ENCODE measurements at regions of chr14 and their contacts with region 1.

Region 1: DNA sequence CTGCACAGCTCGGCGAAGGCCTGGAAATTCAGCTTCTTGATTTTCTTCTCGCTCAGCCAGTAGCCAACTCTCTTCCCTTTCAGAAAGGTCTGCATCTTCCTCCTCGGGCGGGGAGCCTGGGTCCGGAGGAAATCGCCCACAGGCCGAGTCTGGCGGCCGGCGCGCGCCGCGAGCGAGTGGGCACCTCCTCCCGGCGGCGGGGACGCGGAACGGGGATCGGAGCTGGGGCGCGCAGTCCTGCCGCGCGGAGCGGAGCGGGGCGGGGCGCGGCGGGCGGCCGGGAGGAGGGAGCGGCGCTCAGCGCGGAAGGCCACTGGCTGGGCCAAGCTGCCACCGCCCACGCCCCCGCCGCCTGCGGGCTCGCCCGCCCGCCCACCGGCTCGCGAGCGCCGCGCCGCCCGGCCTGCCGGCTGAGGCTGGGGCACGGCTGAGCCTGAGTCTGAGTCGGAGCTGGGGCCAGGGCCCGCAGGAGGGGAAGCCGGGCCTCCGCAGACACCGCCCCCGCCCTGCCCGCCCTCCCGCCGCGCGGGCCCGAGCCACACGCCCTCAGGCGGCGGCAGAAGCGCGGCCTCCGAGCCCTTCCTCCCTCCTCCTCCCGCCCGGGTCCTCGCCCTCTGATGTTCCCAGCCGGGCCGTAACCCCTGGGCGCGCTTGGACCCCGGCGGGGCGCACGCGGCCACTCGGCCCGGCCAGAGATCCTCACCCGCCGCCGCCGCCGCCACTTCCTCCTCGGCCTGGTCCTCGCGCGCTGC is 480 bp downstream of the ITPK1 start:
- DNase-seq: peak; percentile 87
- ATAC-seq: peak; percentile 77
- H3K4me3 Mint-ChIP-seq: peak overlapping the region; percentile 91
- H3K27ac Mint-ChIP-seq: peak overlapping the region; percentile 73
- H3K4me1 Mint-ChIP-seq: peaks cover 30% of the 10 kb centered on the region
- H3K27me3 Mint-ChIP-seq: no peaks in the 10 kb centered on the region
- CTCF ChIP-seq: no peak

Region 2: GRCh38 chr14:92737206-92737605 is 378.0 kb before region 1 on chr14:
- CTCF ChIA-PET with region 1: no interaction called
- POLR2A ChIA-PET with region 1: no interaction called
- intact Hi-C with region 1: no loop called
- DNase-seq: no peak
- ATAC-seq: no peak
- H3K4me3 Mint-ChIP-seq: no peak overlapping the region
- H3K27ac Mint-ChIP-seq: peak overlapping the region; percentile 46
- H3K4me1 Mint-ChIP-seq: peaks cover 20% of the 10 kb centered on the region
- H3K27me3 Mint-ChIP-seq: no peaks in the 10 kb centered on the region
- CTCF ChIP-seq: no peak

Region 3: GRCh38 chr14:92951912-92952471 is 163.3 kb before region 1 on chr14:
- CTCF ChIA-PET with region 1: interaction called, 21 read pairs
- POLR2A ChIA-PET with region 1: no interaction called
- intact Hi-C with region 1: loop called (anchors 1 kb)
- DNase-seq: peak; percentile 79
- ATAC-seq: peak; percentile 98
- H3K4me3 Mint-ChIP-seq: no peak overlapping the region
- H3K27ac Mint-ChIP-seq: no peak overlapping the region
- H3K4me1 Mint-ChIP-seq: peaks cover 4% of the 10 kb centered on the region
- H3K27me3 Mint-ChIP-seq: no peaks in the 10 kb centered on the region
- CTCF ChIP-seq: peak; percentile 95

Region 4: DNA sequence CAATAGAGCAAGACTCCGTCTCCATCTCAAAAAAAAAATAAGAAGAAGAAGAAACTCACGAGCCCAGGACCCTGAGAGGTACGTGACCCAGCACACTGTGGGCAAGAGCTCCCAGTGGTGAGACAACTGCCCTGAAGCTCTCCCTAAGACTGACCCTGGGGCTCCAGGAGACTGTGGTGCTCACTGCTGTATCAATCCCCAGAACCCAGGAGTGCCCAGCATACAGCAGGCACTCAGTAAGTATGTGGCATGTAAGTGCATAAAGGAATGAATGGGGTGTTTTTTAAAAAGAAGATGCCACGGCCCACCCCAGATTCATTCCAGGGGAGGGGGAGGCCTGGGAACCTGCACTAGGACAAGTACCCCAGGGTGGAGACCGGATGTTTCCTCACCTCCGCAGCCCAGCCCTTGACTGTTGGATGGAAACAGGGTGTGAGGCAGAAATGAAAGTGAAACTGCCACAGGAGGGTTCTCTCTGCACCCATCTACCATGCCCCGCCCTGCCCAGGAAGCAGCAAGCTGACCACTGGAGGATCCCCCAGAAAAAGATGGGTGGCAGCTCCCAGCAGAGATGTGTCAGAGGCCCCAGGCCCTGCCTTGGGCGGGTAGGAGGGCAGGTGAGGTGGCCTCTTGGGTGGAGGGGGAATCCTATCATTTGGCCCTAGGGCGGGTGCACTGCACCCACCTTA is 11.7 kb before region 1 on chr14:
- CTCF ChIA-PET with region 1: interaction called, 28 read pairs
- POLR2A ChIA-PET with region 1: interaction called, 6 read pairs
- intact Hi-C with region 1: loop called (anchors 1 kb)
- DNase-seq: peak; percentile 37
- ATAC-seq: peak; percentile 93
- H3K4me3 Mint-ChIP-seq: peak overlapping the region; percentile 77
- H3K27ac Mint-ChIP-seq: peak overlapping the region; percentile 87
- H3K4me1 Mint-ChIP-seq: peaks cover 39% of the 10 kb centered on the region
- H3K27me3 Mint-ChIP-seq: no peaks in the 10 kb centered on the region
- CTCF ChIP-seq: no peak

Region 5: GRCh38 chr14:93184388-93185353 is 69.4 kb after region 1 on chr14 and contains the starts of genes LYSET and MOAP1:
- CTCF ChIA-PET with region 1: interaction called, 8 read pairs
- POLR2A ChIA-PET with region 1: interaction called, 24 read pairs
- intact Hi-C with region 1: loop called (anchors 1 kb)
- DNase-seq: peak; percentile 81
- ATAC-seq: peak; percentile 83
- H3K4me3 Mint-ChIP-seq: peak within 1 kb of the TSS; percentile 92
- H3K27ac Mint-ChIP-seq: peak within 1 kb of the TSS; percentile 93
- H3K4me1 Mint-ChIP-seq: peaks cover 24% of the 10 kb centered on the region
- H3K27me3 Mint-ChIP-seq: no peaks in the 10 kb centered on the region
- CTCF ChIP-seq: no peak
- total RNA-seq, gene LYSET: 17.6 and 19.3 TPM in 2 replicates
- total RNA-seq, gene MOAP1: 21.3 and 24.4 TPM in 2 replicates

Region 6: GRCh38 chr14:93332853-93333630 is 217.8 kb after region 1 on chr14 and contains the start of gene BTBD7:
- CTCF ChIA-PET with region 1: no interaction called
- POLR2A ChIA-PET with region 1: no interaction called
- intact Hi-C with region 1: loop called (anchors 1 kb)
- DNase-seq: peak; percentile 94
- ATAC-seq: peak; percentile 91
- H3K4me3 Mint-ChIP-seq: peak within 1 kb of the TSS; percentile 95
- H3K27ac Mint-ChIP-seq: peak within 1 kb of the TSS; percentile 90
- H3K4me1 Mint-ChIP-seq: peaks cover 40% of the 10 kb centered on the region
- H3K27me3 Mint-ChIP-seq: no peaks in the 10 kb centered on the region
- CTCF ChIP-seq: no peak
- total RNA-seq, gene BTBD7: 34.4 and 41.2 TPM in 2 replicates

Region 7: DNA sequence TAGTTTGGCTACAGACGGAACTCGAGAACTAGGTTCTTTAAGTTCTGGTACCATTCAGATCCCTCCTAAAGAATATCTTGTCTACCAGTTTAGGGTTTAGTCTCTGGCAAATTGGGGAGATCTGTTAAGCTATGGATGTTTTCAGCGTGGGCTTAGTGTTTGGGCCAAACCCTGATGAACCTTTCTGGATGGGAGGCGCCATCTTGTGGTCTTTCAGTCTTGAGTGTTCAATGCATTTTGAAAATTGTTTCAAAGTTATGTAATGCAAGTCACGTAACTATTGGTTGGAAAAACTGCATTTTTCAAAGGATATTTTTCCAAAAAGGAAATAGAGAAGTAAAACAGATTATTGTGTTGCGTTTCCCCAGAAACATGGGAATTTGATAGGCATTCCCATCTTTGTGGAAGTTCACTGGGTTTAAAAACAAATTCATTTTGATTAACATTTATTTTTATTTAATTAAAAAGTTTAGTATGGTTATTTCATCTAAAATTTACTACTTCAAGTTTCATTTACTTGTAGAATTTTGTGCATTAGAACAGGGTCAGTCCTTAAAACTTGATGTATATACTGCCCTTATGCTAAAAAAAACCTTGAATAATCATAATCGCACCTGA is 504.0 kb after region 1 on chr14:
- CTCF ChIA-PET with region 1: interaction called, 6 read pairs
- POLR2A ChIA-PET with region 1: no interaction called
- intact Hi-C with region 1: loop called (anchors 1 kb)
- DNase-seq: no peak
- ATAC-seq: no peak
- H3K4me3 Mint-ChIP-seq: no peak overlapping the region
- H3K27ac Mint-ChIP-seq: no peak overlapping the region
- H3K4me1 Mint-ChIP-seq: no peaks in the 10 kb centered on the region
- H3K27me3 Mint-ChIP-seq: peaks cover 4% of the 10 kb centered on the region
- CTCF ChIP-seq: peak; percentile 46

Measured in activated B cell treated with CpG ODN at 0.5 μM for 24 hours (primary cell).